Activated T-helper 2 cell treated with anti-CD3 and anti-CD28 coated beads, Interferon-gamma antibody, Interleukin-2, Interleukin-4, amounts not matched to agents 10 μg/mL and 5 μg/mL and 100 μg/mL, durations not matched to agents 14 hours and 24 hours and 36 hours (primary cell): ENCODE measurements at regions of chr5 and their contacts with region 1.

Region 1: GRCh38 chr5:148620696-148621095 is 33.6 kb downstream of the HTR4 start:
- DNase-seq: peak; percentile 40
- H3K4me3 Mint-ChIP-seq: no peak overlapping the region
- H3K27ac Mint-ChIP-seq: no peak overlapping the region
- H3K4me1 Mint-ChIP-seq: peaks cover 35% of the 10 kb centered on the region
- H3K27me3 Mint-ChIP-seq: peaks cover 34% of the 10 kb centered on the region

Region 2: DNA sequence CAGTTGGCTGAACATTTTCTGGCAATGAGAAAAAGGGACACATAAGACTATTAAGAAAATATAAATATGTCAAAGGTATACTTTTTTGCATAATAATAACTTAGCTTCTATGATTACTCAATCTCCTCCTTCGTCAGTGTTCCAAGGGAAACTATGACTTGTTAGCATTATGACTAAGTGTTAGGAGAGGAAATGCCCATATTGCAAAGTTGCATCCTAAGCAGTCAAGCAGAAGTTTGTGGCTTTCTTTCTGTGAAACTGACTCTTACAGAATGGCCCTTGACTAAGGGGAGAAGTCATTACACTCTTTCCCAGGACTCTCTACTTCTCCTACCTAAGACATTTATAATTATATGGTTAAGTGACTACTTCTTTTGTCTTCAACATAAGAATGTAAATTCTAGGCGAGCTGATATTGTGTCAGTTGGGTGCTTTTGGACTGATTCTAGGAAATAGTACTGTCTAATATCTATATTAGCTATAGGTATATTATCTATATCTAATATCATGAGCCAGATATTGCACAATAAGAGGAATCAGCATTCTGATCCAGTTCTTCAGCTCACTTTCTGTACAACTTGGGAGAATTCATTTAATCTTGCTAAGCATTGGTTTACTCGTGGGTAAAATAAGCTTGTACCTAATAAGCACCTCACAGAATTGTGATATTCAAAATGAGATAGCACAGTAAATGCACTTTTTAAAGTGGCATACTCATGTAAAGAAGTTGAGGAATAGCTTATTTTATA is 434.3 kb before region 1 on chr5:
- intact Hi-C with region 1: loop called (anchors 1 kb)
- DNase-seq: no peak
- H3K4me3 Mint-ChIP-seq: no peak overlapping the region
- H3K27ac Mint-ChIP-seq: no peak overlapping the region
- H3K4me1 Mint-ChIP-seq: peaks cover 11% of the 10 kb centered on the region
- H3K27me3 Mint-ChIP-seq: peaks cover 3% of the 10 kb centered on the region

Region 3: GRCh38 chr5:148443998-148444397 is 176.7 kb before region 1 on chr5:
- intact Hi-C with region 1: loop called (anchors 5 kb)
- DNase-seq: peak; percentile 15
- H3K4me3 Mint-ChIP-seq: no peak overlapping the region
- H3K27ac Mint-ChIP-seq: no peak overlapping the region
- H3K4me1 Mint-ChIP-seq: peaks cover 2% of the 10 kb centered on the region
- H3K27me3 Mint-ChIP-seq: no peaks in the 10 kb centered on the region

Region 4: DNA sequence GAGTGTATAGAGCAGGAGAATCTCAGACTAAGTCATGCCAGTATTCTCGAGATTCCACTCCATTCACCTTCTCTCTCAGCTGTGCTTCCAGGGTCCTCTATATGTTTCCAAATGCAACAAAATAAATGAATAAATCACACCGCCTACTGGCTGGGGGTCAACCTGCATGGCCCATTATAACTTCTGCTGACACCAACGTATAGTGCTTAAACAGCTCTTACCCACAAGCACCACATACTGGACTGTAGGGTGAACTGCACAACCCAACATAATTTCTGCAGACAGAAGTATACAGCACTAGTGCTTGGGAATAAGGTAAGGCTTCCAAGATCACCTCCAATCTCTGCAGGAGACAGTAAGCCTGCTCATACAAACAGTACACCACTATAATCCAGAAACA is 66.7 kb after region 1 on chr5:
- intact Hi-C with region 1: loop called (anchors 5 kb)
- DNase-seq: no peak
- H3K4me3 Mint-ChIP-seq: no peak overlapping the region
- H3K27ac Mint-ChIP-seq: no peak overlapping the region
- H3K4me1 Mint-ChIP-seq: peaks cover 18% of the 10 kb centered on the region
- H3K27me3 Mint-ChIP-seq: peaks cover 12% of the 10 kb centered on the region

Region 5: GRCh38 chr5:148799737-148800527 is 179.2 kb after region 1 on chr5:
- intact Hi-C with region 1: loop called (anchors 2 kb)
- DNase-seq: no peak
- H3K4me3 Mint-ChIP-seq: no peak overlapping the region
- H3K27ac Mint-ChIP-seq: peak overlapping the region; percentile 78
- H3K4me1 Mint-ChIP-seq: peaks cover 29% of the 10 kb centered on the region
- H3K27me3 Mint-ChIP-seq: peaks cover 3% of the 10 kb centered on the region